GM12878 (cell line): ENCODE measurements at regions of chr12 and their contacts with region 1.

Region 1: DNA sequence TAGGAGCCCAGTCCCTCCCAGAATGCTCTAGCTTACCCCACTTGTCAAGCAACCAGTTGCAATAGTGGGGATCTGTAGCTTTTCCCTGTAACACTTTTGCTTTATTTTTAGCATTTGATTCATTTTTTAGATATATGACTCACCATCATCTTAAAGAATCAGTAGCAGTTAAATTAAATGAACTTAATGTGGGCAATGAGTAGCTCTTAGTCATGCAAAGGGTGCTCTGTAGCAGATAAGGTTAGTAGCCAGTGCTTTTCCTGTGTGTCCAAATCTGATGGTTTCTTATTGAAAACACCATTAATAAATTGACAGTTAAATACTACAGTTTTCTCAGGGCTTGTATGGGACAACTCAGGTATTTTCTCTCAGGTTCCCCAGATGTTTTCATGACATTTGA is 311.8 kb downstream of the RERGL start:
- DNase-seq: no peak
- ATAC-seq: no peak
- H3K4me3 ChIP-seq: no peak overlapping the region
- H3K27ac ChIP-seq: no peak overlapping the region
- H3K4me1 ChIP-seq: no peaks in the 10 kb centered on the region
- H3K27me3 ChIP-seq: no peaks in the 10 kb centered on the region
- CTCF ChIP-seq: no peak
- EP300 ChIP-seq: no peak
- POLR2A ChIP-seq: no peak
- RAD21 ChIP-seq: no peak

Region 2: GRCh38 chr12:17579205-17580026 is 198.8 kb before region 1 on chr12:
- CTCF ChIA-PET with region 1: no interaction called
- POLR2A ChIA-PET with region 1: no interaction called
- RAD21 ChIA-PET with region 1: no interaction called
- SMC1A ChIA-PET with region 1: no interaction called
- in situ Hi-C with region 1: no loop called
- intact Hi-C with region 1: no loop called
- DNase-seq: no peak
- ATAC-seq: no peak
- H3K4me3 ChIP-seq: no peak overlapping the region
- H3K27ac ChIP-seq: no peak overlapping the region
- H3K4me1 ChIP-seq: no peaks in the 10 kb centered on the region
- H3K27me3 ChIP-seq: no peaks in the 10 kb centered on the region
- CTCF ChIP-seq: no peak
- EP300 ChIP-seq: no peak
- POLR2A ChIP-seq: no peak
- RAD21 ChIP-seq: no peak

Region 3: DNA sequence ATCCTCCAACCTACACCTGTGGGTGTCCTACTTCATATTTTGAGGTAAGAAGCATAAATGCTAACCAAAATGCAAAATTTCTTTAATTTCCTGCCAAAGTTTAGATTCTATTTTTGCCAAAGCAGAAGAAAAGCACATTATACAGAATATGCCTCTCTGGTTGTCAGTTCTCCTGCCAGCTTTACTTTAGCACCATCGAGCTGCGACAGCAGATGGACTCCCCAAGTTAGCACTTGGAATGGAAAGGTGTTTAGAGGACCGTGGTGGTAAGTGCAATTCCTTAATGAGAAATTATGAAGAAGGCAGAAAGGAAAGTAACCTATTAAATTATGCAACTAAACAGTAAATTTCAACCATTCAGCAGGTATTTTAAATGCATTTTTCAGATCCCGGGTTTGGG is 14.9 kb before region 1 on chr12:
- CTCF ChIA-PET with region 1: no interaction called
- POLR2A ChIA-PET with region 1: no interaction called
- RAD21 ChIA-PET with region 1: no interaction called
- SMC1A ChIA-PET with region 1: no interaction called
- in situ Hi-C with region 1: no loop called
- intact Hi-C with region 1: no loop called
- DNase-seq: no peak
- ATAC-seq: no peak
- H3K4me3 ChIP-seq: no peak overlapping the region
- H3K27ac ChIP-seq: no peak overlapping the region
- H3K4me1 ChIP-seq: no peaks in the 10 kb centered on the region
- H3K27me3 ChIP-seq: no peaks in the 10 kb centered on the region
- CTCF ChIP-seq: no peak
- EP300 ChIP-seq: no peak
- POLR2A ChIP-seq: no peak
- RAD21 ChIP-seq: no peak

Region 4: GRCh38 chr12:17866802-17867201 is 88.6 kb after region 1 on chr12:
- CTCF ChIA-PET with region 1: no interaction called
- POLR2A ChIA-PET with region 1: no interaction called
- RAD21 ChIA-PET with region 1: no interaction called
- SMC1A ChIA-PET with region 1: no interaction called
- in situ Hi-C with region 1: loop called (anchors 5 kb)
- intact Hi-C with region 1: loop called (anchors 2 kb)
- DNase-seq: no peak
- ATAC-seq: no peak
- H3K4me3 ChIP-seq: no peak overlapping the region
- H3K27ac ChIP-seq: no peak overlapping the region
- H3K4me1 ChIP-seq: no peaks in the 10 kb centered on the region
- H3K27me3 ChIP-seq: no peaks in the 10 kb centered on the region
- CTCF ChIP-seq: no peak
- EP300 ChIP-seq: no peak
- POLR2A ChIP-seq: no peak
- RAD21 ChIP-seq: no peak